ENCODE measurements at regions of chr4 and their contacts with region 1.

Region 1: DNA sequence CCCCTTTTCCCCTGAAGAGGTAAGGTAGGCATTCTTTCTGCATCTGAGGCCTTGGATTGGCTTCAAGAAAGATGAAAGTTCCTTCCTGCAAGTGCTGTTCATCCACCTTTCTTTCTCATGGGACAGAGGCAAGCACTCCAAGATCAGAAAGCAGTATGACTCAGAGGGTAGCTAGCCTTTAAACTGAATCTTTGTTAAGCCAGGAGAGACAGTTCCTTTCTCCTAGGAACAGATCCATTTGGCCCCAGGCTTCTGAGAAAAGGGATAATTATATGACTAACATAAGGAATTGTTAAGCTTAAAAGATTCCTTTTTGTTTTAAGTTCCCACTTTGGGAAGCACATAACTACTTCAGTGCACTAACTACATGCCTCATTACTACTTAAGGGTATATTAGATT is 192.0 kb downstream of the PPP3CA start:
- DNase-seq: no peak
- ATAC-seq: no peak
- H3K4me3 Mint-ChIP-seq: no peak overlapping the region
- H3K27ac Mint-ChIP-seq: no peak overlapping the region
- H3K4me1 Mint-ChIP-seq: peaks cover 51% of the 10 kb centered on the region
- H3K27me3 Mint-ChIP-seq: no peaks in the 10 kb centered on the region
- CTCF ChIP-seq: no peak

Region 2: GRCh38 chr4:101020956-101021355 is 134.4 kb before region 1 on chr4:
- CTCF ChIA-PET with region 1: interaction called, 3 read pairs
- POLR2A ChIA-PET with region 1: no interaction called
- intact Hi-C with region 1: loop called (anchors 5 kb)
- DNase-seq: no peak
- ATAC-seq: peak; percentile 78
- H3K4me3 Mint-ChIP-seq: no peak overlapping the region
- H3K27ac Mint-ChIP-seq: peak overlapping the region; percentile 40
- H3K4me1 Mint-ChIP-seq: peaks cover 49% of the 10 kb centered on the region
- H3K27me3 Mint-ChIP-seq: no peaks in the 10 kb centered on the region
- CTCF ChIP-seq: no peak

Region 3: GRCh38 chr4:101037938-101038413 is 117.4 kb before region 1 on chr4:
- CTCF ChIA-PET with region 1: no interaction called
- POLR2A ChIA-PET with region 1: no interaction called
- intact Hi-C with region 1: loop called (anchors 1 kb)
- DNase-seq: peak; percentile 19
- ATAC-seq: peak; percentile 44
- H3K4me3 Mint-ChIP-seq: no peak overlapping the region
- H3K27ac Mint-ChIP-seq: peak overlapping the region; percentile 77
- H3K4me1 Mint-ChIP-seq: peaks cover 22% of the 10 kb centered on the region
- H3K27me3 Mint-ChIP-seq: no peaks in the 10 kb centered on the region
- CTCF ChIP-seq: no peak